ENCODE measurements at regions of chr3 and their contacts with region 1.

Region 1: DNA sequence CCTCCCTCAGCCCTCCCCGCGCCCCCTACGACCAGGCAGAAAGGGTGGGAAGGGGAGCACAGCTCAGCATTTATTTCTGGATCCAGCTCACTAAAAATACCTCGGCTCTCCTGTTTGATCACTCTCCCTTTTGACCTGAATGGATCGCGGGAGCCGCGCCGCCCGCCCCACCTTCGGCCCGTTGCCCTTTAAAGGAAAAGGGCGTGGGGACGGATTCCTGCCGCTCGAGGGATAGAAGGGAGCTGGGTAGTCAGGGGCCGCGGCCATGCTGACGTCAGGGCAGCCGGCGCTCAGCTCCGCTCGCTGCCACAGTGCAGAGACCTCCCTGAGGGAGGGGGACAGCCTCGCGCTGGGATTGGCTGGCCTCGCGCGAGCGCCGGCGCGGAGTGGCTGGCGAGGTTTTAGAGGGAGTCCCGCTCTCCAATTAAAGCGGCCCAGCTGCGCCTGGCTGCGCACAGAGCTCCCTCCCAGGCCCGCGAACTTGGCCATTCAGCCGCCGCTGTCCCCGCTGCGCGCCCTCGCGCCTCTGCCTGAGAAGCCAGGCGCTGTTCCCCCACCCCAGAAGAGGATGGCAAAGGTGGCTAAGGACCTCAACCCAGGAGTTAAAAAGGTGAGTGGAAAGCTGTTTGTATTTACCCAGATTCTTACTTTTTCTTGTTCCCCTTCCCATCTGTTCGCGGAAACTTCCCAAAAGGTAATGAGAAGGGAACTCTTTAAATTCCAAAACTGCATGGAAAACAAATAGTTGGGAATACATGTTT is at the start of gene LMCD1:
- DNase-seq: peak; percentile 95
- H3K4me3 ChIP-seq: peak within 1 kb of the TSS; percentile 41 to 54 (median 49)
- H3K27ac ChIP-seq: peak within 1 kb of the TSS; percentile 54
- H3K4me1 ChIP-seq: peaks cover 44% of the 10 kb centered on the region
- H3K27me3 ChIP-seq: no peaks in the 10 kb centered on the region
- CTCF ChIP-seq: peak in 1 of 2 donors; percentile 27
- total RNA-seq, gene LMCD1: 1.9 to 4.5 TPM

Region 2: DNA sequence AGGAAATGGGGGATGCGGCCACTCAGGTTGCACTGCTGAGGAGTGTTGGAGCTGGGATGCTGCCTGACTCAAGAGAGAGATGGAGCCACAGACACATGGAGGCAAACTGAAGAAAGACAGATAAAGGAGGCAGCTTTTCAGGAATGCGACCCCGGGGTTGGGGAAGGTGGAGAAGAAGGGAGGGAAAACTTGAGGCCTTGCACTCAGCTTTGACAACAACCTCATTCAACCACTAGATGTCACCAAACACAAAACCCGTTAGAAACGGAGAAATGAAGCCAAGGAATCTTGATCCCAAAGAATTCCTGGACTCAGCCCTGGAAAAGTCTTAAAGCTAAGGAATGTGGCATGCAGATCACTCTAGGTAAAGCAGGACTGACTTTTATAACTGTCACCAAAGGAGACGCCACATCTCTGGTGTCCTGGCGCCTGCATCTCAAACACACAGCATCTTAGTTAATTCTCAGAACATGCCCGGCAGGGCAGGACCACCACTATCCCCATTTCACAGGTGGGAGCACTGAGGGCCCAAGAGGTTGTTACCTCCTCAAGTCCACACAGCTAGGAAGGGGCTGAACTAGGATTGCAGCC is 59.5 kb before region 1 on chr3:
- CTCF ChIA-PET with region 1: no interaction called
- dilution Hi-C with region 1: no loop called
- in situ Hi-C with region 1: no loop called
- intact Hi-C with region 1: loop called (anchors 2 kb)
- DNase-seq: peak; percentile 30
- H3K4me3 ChIP-seq: no peak overlapping the region
- H3K27ac ChIP-seq: no peak overlapping the region
- H3K4me1 ChIP-seq: peaks cover 5% of the 10 kb centered on the region
- H3K27me3 ChIP-seq: no peaks in the 10 kb centered on the region
- CTCF ChIP-seq: peak; percentile 63 to 75

Region 3: DNA sequence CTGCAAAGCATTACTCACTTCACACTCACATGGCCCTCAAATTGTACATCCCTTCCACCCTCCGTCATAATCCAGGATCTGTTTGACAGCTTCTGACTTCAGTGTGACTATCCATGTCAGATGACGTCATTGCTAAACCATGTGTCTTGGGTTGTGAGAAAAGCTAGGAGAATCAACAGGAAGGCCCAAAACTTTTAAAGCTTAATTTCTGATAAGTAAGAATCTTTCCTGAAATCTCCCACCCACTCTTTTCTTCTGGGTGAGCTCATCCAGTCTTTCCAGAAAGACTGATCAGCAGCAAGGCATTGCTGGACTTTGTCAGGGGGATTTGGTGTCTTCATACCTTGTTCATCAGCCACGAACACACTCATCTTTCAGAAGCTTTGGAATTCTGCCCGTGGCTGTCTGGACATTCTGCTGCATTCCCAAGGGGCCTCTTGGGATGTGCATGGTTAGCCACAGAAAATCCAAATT is 11.4 kb before region 1 on chr3:
- CTCF ChIA-PET with region 1: no interaction called
- dilution Hi-C with region 1: no loop called
- in situ Hi-C with region 1: no loop called
- intact Hi-C with region 1: loop called (anchors 1 kb)
- DNase-seq: peak; percentile 84
- H3K4me3 ChIP-seq: no peak overlapping the region
- H3K27ac ChIP-seq: no peak overlapping the region
- H3K4me1 ChIP-seq: peaks cover 16% of the 10 kb centered on the region
- H3K27me3 ChIP-seq: no peaks in the 10 kb centered on the region
- CTCF ChIP-seq: no peak

Region 4: GRCh38 chr3:8629151-8630021 is 127.8 kb after region 1 on chr3:
- CTCF ChIA-PET with region 1: no interaction called
- dilution Hi-C with region 1: no loop called
- in situ Hi-C with region 1: no loop called
- intact Hi-C with region 1: loop called (anchors 5 kb)
- DNase-seq: peak; percentile 95
- H3K4me3 ChIP-seq: no peak overlapping the region
- H3K27ac ChIP-seq: peak overlapping the region; percentile 69
- H3K4me1 ChIP-seq: peaks cover 28% of the 10 kb centered on the region
- H3K27me3 ChIP-seq: peaks cover 3% of the 10 kb centered on the region
- CTCF ChIP-seq: no peak

Region 5: DNA sequence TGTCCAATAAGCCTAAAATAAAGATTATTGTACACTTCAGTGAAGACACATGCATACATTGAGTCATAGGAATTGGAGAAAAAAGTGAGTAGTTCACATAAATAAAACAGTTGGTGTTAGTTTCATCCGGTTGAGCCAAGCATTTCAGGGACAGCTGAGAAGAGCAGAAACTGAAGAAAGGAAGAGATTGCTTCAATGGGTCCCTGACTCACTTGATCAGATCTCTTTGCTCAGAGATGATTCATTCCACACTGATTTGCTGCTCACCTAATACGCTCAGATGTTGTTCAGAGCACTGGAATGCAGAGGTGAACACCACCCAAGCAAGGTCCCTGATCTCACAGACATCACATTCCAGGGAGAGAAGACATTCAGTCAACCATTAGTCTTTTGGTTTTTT is 368.1 kb after region 1 on chr3:
- CTCF ChIA-PET with region 1: no interaction called
- dilution Hi-C with region 1: no loop called
- in situ Hi-C with region 1: no loop called
- intact Hi-C with region 1: no loop called
- DNase-seq: peak; percentile 99
- H3K4me3 ChIP-seq: no peak overlapping the region
- H3K27ac ChIP-seq: peak overlapping the region; percentile 97
- H3K4me1 ChIP-seq: peaks cover 34% of the 10 kb centered on the region
- H3K27me3 ChIP-seq: no peaks in the 10 kb centered on the region
- CTCF ChIP-seq: no peak